ENCODE measurements at regions of chr3 and their contacts with region 1.

Region 1: DNA sequence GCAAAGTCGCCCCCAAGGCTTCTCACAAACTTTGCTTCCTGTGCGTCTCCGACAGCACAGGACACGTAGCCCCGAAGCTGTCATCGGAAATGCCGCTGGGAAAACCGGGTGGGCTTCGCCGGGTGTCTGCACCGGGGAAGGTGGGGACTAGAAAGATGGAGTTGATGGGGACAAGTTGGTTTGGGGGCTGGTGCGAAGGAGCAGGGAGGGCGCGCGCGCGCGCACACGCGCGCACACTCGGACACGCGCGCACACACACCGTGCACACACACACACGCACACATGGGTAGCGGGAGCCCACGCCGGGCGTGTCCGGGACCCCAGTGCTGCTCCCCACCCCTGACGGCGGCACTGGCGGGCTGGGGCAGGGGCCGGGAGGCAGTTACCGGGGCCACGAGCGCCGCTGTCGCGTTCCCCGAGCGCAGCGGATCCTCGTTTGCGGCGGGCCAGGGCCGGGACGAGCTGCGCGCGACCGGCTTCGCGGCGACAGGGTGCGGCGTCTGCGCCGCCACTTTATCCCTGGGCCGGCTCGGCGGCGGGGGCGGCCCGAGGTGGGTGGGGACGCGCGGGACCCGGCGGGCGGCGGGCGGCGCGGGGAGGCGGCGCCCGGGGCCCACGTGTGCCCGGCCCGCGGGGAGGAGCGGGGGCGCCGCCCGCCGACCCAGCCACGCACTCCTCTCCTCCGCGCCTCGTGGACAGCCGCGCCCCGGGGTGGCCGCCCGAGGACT is 547 bp upstream of the MGLL start:
- DNase-seq: peak; percentile 78 to 92 (median 90)
- ATAC-seq: peak; percentile 87 to 92
- H3K4me3 ChIP-seq: peak overlapping the region; percentile 85
- H3K27ac ChIP-seq: peak overlapping the region; percentile 94
- H3K4me1 ChIP-seq: no peaks in the 10 kb centered on the region
- H3K27me3 ChIP-seq: no peaks in the 10 kb centered on the region

Region 2: DNA sequence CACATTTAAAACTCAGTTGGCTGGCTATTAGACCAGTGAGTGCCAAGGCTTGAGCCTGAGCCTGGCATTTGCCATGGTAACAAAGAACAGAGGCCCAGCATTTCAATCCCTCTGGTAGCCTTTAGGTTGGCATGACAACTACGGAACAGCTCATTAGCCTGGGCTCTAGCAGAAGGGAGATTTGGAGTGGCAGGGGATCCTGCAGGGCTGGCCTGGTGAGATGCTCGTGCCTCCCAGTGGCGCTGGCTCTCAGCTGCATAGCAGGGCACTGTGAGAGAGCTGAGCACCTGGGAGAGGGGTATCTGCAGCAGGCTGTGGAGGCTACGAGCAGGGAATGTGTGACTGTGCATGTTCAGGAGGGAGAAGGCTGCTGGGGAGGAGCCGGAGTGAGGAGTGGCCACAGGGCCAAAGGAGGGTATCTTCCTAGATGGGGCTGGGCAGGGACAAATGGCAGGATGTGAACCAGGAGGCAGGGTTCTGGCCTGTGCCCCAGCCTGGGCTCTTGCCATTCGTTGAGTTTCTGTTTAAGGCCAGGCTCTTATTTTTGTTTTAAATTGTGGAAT is 155.7 kb before region 1 on chr3:
- intact Hi-C with region 1: loop called in 1 of 4 experiments (anchors 10 kb)
- DNase-seq: no peak
- ATAC-seq: no peak
- H3K4me3 ChIP-seq: no peak overlapping the region
- H3K27ac ChIP-seq: no peak overlapping the region
- H3K4me1 ChIP-seq: no peaks in the 10 kb centered on the region
- H3K27me3 ChIP-seq: no peaks in the 10 kb centered on the region

Region 3: GRCh38 chr3:127688416-127689265 is 134.2 kb before region 1 on chr3:
- intact Hi-C with region 1: loop called in 2 of 4 experiments (anchors 5 to 10 kb)
- DNase-seq: peak; percentile 59 to 80 (median 71)
- ATAC-seq: peak; percentile 44 to 56
- H3K4me3 ChIP-seq: no peak overlapping the region
- H3K27ac ChIP-seq: peak overlapping the region; percentile 68
- H3K4me1 ChIP-seq: peaks cover 11% of the 10 kb centered on the region
- H3K27me3 ChIP-seq: no peaks in the 10 kb centered on the region

Region 4: DNA sequence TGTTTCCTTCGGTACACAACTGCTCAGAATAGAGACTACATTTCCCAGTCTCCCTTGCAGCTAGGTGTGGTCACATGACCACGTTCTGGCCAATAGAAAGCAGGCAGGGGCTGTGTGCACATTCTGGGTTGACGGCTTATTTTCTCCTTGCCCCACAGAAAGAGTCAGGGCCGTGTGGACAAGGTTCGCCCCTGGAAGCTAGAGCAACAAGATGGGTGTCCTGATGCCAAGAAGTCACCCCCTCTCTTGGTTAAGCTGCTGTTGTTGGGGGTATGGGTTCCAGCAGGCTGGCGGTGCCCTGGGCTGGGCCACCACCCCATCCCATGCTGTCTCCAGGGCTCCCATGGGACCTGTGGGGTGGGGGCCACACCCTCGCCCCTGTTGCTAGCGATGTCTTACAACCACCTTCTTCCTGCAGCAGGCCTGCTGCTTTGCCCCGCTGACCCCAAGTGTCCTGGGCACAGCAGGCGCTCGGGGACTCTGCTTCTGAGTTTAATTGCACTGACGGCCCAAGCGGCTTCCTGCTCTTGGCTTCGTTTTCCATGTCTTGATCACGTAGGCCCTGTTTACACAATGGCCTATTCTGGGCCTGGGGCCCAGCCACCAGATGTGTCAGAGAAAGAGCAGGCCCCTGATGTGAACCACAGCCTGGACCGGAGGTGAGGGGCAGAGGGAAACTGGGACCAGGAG is 125.2 kb before region 1 on chr3:
- intact Hi-C with region 1: loop called in 3 of 4 experiments (anchors 5 to 10 kb)
- DNase-seq: peak; percentile 90 to 96 (median 94)
- ATAC-seq: peak; percentile 79 to 85
- H3K4me3 ChIP-seq: no peak overlapping the region
- H3K27ac ChIP-seq: peak overlapping the region; percentile 85
- H3K4me1 ChIP-seq: peaks cover 33% of the 10 kb centered on the region
- H3K27me3 ChIP-seq: no peaks in the 10 kb centered on the region

Region 5: GRCh38 chr3:127762077-127762786 is 60.6 kb before region 1 on chr3:
- intact Hi-C with region 1: loop called in 1 of 4 experiments (anchors 10 kb)
- DNase-seq: peak in 2 of 3 donors; percentile 72
- ATAC-seq: peak; percentile 67 to 70
- H3K4me3 ChIP-seq: no peak overlapping the region
- H3K27ac ChIP-seq: peak overlapping the region; percentile 72
- H3K4me1 ChIP-seq: peaks cover 27% of the 10 kb centered on the region
- H3K27me3 ChIP-seq: no peaks in the 10 kb centered on the region

Region 6: GRCh38 chr3:127970966-127971592 is 148.2 kb after region 1 on chr3:
- intact Hi-C with region 1: loop called in 1 of 4 experiments (anchors 10 kb)
- DNase-seq: no peak
- ATAC-seq: peak; percentile 78 to 80
- H3K4me3 ChIP-seq: no peak overlapping the region
- H3K27ac ChIP-seq: no peak overlapping the region
- H3K4me1 ChIP-seq: no peaks in the 10 kb centered on the region
- H3K27me3 ChIP-seq: no peaks in the 10 kb centered on the region

Measured in right cardiac atrium (tissue), 5 donors.